HepG2 (cell line): ENCODE measurements at regions of chr2 and their contacts with region 1.

Region 1: DNA sequence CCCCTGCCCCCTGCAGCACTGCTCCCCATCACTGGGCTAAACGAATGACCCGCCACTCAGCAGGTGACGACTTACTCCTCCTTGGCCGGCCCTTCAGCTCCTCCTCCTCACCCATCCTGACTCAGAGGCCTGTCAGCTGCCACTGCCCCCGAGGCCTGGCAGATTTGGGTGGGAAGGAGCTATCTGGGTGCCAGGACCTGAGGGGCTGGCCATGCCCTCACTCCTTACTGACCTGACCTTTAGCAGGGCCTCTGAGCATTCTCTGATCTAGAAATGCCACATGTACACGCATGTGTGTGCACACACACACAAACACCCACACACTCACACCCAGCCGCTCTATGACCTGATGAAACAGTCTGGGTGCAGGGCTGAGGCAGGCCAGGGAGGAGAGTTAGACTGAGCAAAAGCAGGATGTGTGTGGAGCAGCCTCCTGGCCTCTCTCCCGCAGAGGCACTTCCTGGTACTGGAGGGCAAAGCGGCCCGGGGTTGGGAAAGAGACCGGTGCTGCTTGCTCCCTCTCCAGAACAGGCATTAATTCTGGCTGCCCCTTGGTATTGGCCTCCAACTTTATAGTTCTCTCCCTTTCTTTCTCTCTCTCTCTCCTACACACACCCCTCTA is 68.0 kb downstream of the ZFP36L2 start:
- DNase-seq: peak; percentile 74
- ATAC-seq: peak; percentile 47
- H3K4me3 ChIP-seq: peak overlapping the region; percentile 39 to 70 (median 53)
- H3K27ac ChIP-seq: peak overlapping the region; percentile 57
- H3K4me1 ChIP-seq: peaks cover 90% of the 10 kb centered on the region
- H3K27me3 ChIP-seq: no peaks in the 10 kb centered on the region
- CTCF ChIP-seq: no peak
- EP300 ChIP-seq: no peak; a peak in 1 of 4 replicates
- POLR2A ChIP-seq: peak in 1 of 2 experiments; percentile 63; a peak in 3 of 4 replicates
- RAD21 ChIP-seq: 0 out of 2 replicates have a peak, but pooled peaks have one; percentile 7

Region 2: GRCh38 chr2:42060718-42061619 is 1097.4 kb before region 1 on chr2:
- CTCF ChIA-PET with region 1: no interaction called
- POLR2A ChIA-PET with region 1: no interaction called
- in situ Hi-C with region 1: no loop called
- intact Hi-C with region 1: no loop called
- DNase-seq: no peak
- ATAC-seq: peak; percentile 58
- H3K4me3 ChIP-seq: peak overlapping the region in 1 of 3 experiments; percentile 29; a peak in 1 of 6 replicates
- H3K27ac ChIP-seq: no peak overlapping the region
- H3K4me1 ChIP-seq: peaks cover 75% of the 10 kb centered on the region
- H3K27me3 ChIP-seq: no peaks in the 10 kb centered on the region
- CTCF ChIP-seq: no peak
- EP300 ChIP-seq: no peak
- POLR2A ChIP-seq: 0 out of 4 replicates have a peak, but pooled peaks of 1 of the 2 experiments have one; percentile 7
- RAD21 ChIP-seq: no peak

Region 3: GRCh38 chr2:42917425-42917927 is 240.9 kb before region 1 on chr2:
- CTCF ChIA-PET with region 1: no interaction called
- POLR2A ChIA-PET with region 1: no interaction called
- in situ Hi-C with region 1: no loop called
- intact Hi-C with region 1: no loop called
- DNase-seq: no peak
- ATAC-seq: no peak
- H3K4me3 ChIP-seq: no peak overlapping the region
- H3K27ac ChIP-seq: no peak overlapping the region
- H3K4me1 ChIP-seq: peaks cover 44% of the 10 kb centered on the region
- H3K27me3 ChIP-seq: peaks cover 0 to 27% of the 10 kb centered on the region in 2 experiments; a peak in 2 of 5 replicates
- CTCF ChIP-seq: no peak
- EP300 ChIP-seq: no peak
- POLR2A ChIP-seq: no peak
- RAD21 ChIP-seq: no peak

Region 4: DNA sequence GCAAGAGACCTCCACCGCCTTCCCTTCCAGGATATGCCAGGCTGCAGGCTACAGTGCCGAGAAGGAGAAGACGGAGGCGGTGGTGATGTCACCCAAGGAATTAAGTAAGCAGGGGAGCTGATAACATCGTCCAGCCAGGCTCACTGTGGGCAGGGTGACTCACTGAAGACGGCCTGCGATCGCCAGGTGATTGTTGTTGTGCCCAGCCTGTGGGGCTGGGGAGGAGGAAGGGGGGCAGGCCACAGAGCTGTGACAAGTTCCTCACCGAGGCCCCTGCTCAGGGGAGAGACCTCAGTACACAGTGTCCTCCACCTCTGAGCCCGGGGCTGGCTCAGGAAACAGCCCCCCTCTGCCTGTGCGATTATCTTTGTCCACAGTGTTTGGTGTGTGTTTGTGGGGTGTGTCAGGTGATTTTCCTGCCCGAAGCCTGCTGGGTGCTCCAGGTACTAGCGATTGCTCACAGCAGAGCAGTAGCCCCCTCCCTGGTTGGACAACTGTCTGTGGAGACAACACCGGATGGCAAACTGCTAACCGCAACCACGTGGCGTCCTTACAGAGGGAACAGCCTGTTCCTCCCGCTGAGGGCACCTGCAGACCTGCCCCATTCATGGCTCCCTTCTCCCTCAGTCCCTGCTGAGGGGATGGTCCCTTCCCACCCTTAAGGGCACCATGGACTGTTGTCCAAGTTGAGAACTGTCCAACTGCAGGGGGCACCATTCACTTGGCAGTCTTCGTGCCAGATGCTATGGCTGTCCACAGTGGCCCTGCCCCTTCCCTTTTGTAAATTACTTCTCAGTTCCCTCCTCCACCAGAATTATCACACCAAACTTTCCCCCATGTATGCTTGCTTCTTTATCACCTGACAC is 27.1 kb before region 1 on chr2:
- CTCF ChIA-PET with region 1: no interaction called
- POLR2A ChIA-PET with region 1: no interaction called
- in situ Hi-C with region 1: no loop called
- intact Hi-C with region 1: loop called (anchors 2 kb)
- DNase-seq: peak; percentile 80
- ATAC-seq: peak; percentile 68
- H3K4me3 ChIP-seq: peak overlapping the region in 1 of 3 experiments; percentile 34; a peak in 2 of 6 replicates
- H3K27ac ChIP-seq: peak overlapping the region; percentile 11
- H3K4me1 ChIP-seq: peaks cover 86% of the 10 kb centered on the region
- H3K27me3 ChIP-seq: no peaks in the 10 kb centered on the region
- CTCF ChIP-seq: peak; percentile 96
- EP300 ChIP-seq: peak in 1 of 2 experiments; percentile 15; a peak in 1 of 4 replicates
- POLR2A ChIP-seq: no peak
- RAD21 ChIP-seq: peak; percentile 97

Region 5: GRCh38 chr2:43142921-43143438 is 15.4 kb before region 1 on chr2:
- CTCF ChIA-PET with region 1: no interaction called
- POLR2A ChIA-PET with region 1: interaction called, 13 read pairs
- in situ Hi-C with region 1: no loop called
- intact Hi-C with region 1: loop called (anchors 1 kb)
- DNase-seq: peak; percentile 78
- ATAC-seq: peak; percentile 86
- H3K4me3 ChIP-seq: no peak overlapping the region
- H3K27ac ChIP-seq: peak overlapping the region; percentile 0
- H3K4me1 ChIP-seq: peaks cover 62% of the 10 kb centered on the region
- H3K27me3 ChIP-seq: no peaks in the 10 kb centered on the region
- CTCF ChIP-seq: peak; percentile 70
- EP300 ChIP-seq: no peak
- POLR2A ChIP-seq: no peak
- RAD21 ChIP-seq: peak; percentile 75

Region 6: DNA sequence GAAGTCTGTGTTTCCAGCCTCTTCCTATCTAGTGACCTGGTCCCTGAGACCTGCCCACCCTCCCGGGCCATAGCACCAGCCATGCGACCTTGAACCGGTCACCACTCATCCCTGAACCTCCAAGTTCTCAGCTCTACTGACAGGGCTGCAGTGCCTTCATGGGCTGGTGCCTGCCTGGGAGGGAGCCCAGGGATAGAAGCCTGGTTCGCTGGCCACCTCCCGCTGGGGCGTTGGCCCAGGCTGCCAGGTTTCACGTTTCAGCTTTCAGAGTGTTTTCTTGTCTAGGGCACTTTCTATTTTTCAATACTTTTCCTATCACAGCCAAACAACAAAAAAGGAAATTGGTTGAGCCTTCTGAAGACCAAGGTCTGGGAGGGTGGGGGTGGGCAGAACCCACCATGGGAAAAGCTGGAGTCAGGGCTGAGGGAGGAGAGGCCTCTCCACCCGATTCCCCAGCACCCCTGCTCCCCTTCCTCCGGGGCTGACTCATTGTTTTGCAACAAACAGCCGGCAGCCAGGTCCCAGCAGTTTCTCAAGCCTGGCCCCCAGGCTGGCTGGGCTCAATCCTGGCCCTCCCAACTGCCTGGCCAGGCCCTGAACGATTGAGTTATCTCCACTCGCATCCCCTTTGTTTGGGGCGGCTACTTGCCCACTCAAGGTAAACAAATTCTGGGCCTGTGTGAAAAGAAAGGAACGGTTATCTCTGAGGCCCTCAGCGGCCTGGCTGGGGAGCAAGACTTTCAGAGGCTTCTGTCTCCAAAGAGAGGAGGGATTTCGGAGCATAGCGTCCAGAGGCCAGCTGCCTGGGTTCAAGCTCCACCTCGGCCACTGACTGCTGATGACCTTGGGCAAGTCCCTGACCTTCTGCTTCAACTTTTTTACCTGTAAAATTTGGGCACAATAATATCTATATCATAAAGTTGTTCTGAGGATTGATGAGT is 20.5 kb after region 1 on chr2:
- CTCF ChIA-PET with region 1: no interaction called
- POLR2A ChIA-PET with region 1: interaction called, 97 read pairs
- in situ Hi-C with region 1: no loop called
- intact Hi-C with region 1: loop called (anchors 2 kb)
- DNase-seq: peak; percentile 90
- ATAC-seq: peak; percentile 88
- H3K4me3 ChIP-seq: peak overlapping the region; percentile 43 to 62 (median 61)
- H3K27ac ChIP-seq: peak overlapping the region; percentile 81
- H3K4me1 ChIP-seq: peaks cover 77% of the 10 kb centered on the region
- H3K27me3 ChIP-seq: no peaks in the 10 kb centered on the region
- CTCF ChIP-seq: peak; percentile 1; the same call in 1 of the 2 replicates
- EP300 ChIP-seq: peak in 1 of 2 experiments; percentile 77; a peak in 2 of 4 replicates
- POLR2A ChIP-seq: no peak; a peak in 1 of 4 replicates
- RAD21 ChIP-seq: peak; percentile 20; the same call in 1 of the 2 replicates

Region 7: DNA sequence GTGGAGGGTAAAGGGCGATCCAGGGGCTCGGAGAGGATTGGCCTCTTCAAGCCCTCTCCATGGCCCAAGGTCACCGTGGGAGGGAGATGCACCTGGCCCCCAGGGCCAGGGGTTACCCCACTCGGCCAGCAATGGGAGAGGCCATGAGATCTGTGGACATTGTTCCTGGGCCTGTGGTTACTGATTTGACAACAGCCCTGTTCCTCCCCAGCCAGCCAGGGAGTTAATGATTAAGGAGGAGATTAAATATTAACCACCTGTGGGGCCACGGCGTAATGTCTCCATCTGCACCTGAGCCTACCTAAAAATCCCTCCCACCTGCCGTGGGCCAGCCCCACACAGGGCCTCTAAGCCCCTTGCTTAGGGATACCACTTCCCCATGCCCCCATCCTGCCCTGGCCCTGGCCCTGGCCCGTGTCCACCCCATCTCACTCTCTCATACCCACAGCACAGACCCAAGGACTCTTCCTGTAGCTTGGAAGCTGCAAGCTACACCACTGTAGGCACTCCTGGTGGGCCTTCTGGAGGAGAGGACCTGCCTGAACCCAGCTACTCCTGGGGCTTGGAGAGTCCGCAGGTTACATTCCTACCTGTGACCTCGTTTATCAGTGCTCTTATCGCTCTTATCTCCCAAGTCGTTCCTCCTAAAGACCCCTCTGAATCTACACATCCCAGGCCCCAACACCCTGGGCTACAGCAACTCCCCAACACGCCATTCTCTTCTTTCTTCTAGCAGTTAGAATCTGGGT is 35.9 kb after region 1 on chr2:
- CTCF ChIA-PET with region 1: no interaction called
- POLR2A ChIA-PET with region 1: interaction called, 35 read pairs
- in situ Hi-C with region 1: no loop called
- intact Hi-C with region 1: loop called (anchors 2 kb)
- DNase-seq: peak; percentile 98
- ATAC-seq: peak; percentile 87
- H3K4me3 ChIP-seq: peak overlapping the region; percentile 49 to 76 (median 64)
- H3K27ac ChIP-seq: peak overlapping the region; percentile 95
- H3K4me1 ChIP-seq: peaks cover 96% of the 10 kb centered on the region
- H3K27me3 ChIP-seq: no peaks in the 10 kb centered on the region
- CTCF ChIP-seq: peak; percentile 14; the same call in 1 of the 2 replicates
- EP300 ChIP-seq: peak; percentile 70 to 94; a peak in 3 of 4 replicates
- POLR2A ChIP-seq: peak in 1 of 2 experiments; percentile 79; a peak in 2 of 4 replicates
- RAD21 ChIP-seq: no peak; the same call in 1 of the 2 replicates